CD4-positive, alpha-beta T cell (primary cell): ENCODE measurements at regions of chr1 and their contacts with region 1.

Region 1: GRCh38 chr1:239711768-239712167 is 325.4 kb downstream of the CHRM3 start:
- DNase-seq: no peak
- ATAC-seq: no peak
- H3K4me3 ChIP-seq: no peak overlapping the region
- H3K4me3 Mint-ChIP-seq: no peak overlapping the region
- H3K27ac ChIP-seq: no peak overlapping the region
- H3K27ac Mint-ChIP-seq: peak overlapping the region; percentile 31
- H3K4me1 ChIP-seq: peaks cover 13% of the 10 kb centered on the region
- H3K4me1 Mint-ChIP-seq: peaks cover 41% of the 10 kb centered on the region
- H3K27me3 ChIP-seq: no peaks in the 10 kb centered on the region
- H3K27me3 Mint-ChIP-seq: no peaks in the 10 kb centered on the region
- CTCF ChIP-seq: no peak

Region 2: DNA sequence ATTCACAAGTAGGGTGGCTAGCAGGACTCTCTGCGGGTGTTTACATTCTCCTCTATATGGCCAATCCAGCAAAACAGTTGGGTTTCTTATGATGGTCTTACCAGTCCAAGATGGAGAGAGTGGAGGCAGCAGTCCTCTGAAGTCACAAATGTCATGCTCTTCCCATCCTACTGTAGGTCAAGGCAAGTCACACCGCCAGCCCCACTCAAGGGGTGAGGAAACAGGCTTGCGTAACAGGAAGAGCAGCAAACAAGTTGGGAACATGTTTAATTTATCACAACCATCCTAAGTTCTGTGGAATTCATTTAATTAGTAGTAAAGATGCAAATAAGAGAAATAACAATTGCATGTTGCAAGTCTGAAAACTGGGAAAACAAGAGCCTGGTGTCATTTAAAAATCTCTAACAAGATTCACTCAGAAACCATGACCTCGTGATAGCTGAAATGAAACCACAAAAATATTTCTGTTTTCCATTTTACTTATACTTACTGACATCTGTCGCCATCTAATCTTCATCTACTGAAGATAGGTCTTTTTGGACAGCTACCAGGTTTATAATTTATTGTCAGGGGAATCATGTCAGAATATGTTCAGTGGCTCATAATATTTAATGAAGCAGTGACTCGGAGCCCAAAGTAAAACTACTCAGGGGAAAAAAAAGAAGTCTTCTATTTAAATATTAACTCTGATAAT is 30.8 kb after region 1 on chr1:
- CTCF ChIA-PET with region 1: no interaction called
- POLR2A ChIA-PET with region 1: interaction called, 3 read pairs
- intact Hi-C with region 1: loop called in 1 of 2 experiments (anchors 5 kb)
- DNase-seq: no peak
- ATAC-seq: no peak
- H3K4me3 ChIP-seq: no peak overlapping the region
- H3K4me3 Mint-ChIP-seq: peak overlapping the region; percentile 35
- H3K27ac ChIP-seq: no peak overlapping the region
- H3K27ac Mint-ChIP-seq: no peak overlapping the region
- H3K4me1 ChIP-seq: peaks cover 7% of the 10 kb centered on the region
- H3K4me1 Mint-ChIP-seq: peaks cover 44% of the 10 kb centered on the region
- H3K27me3 ChIP-seq: no peaks in the 10 kb centered on the region
- H3K27me3 Mint-ChIP-seq: no peaks in the 10 kb centered on the region
- CTCF ChIP-seq: no peak